Naive thymus-derived CD4-positive, alpha-beta T cell (primary cell): ENCODE measurements at regions of chr3 and their contacts with region 1.

Region 1: GRCh38 chr3:38136777-38137614 is at the start of gene ACAA1:
- DNase-seq: peak; percentile 82 to 96 (median 93)
- ATAC-seq: peak; percentile 96
- H3K4me3 ChIP-seq: peak within 1 kb of the TSS; percentile 98
- H3K4me3 Mint-ChIP-seq: peak within 1 kb of the TSS; percentile 90 to 100 (median 96)
- H3K27ac ChIP-seq: peak within 1 kb of the TSS; percentile 90
- H3K27ac Mint-ChIP-seq: peak within 1 kb of the TSS; percentile 89 to 100 (median 98)
- H3K4me1 ChIP-seq: peaks cover 18 to 35% of the 10 kb centered on the region in 2 donors
- H3K4me1 Mint-ChIP-seq: peaks cover 47 to 86% (median 67%) of the 10 kb centered on the region in 7 donors
- H3K27me3 ChIP-seq: no peaks in the 10 kb centered on the region
- H3K27me3 Mint-ChIP-seq: no peaks in the 10 kb centered on the region
- total RNA-seq, gene ACAA1: 88.1 to 129 (median 91.0) TPM

Region 2: DNA sequence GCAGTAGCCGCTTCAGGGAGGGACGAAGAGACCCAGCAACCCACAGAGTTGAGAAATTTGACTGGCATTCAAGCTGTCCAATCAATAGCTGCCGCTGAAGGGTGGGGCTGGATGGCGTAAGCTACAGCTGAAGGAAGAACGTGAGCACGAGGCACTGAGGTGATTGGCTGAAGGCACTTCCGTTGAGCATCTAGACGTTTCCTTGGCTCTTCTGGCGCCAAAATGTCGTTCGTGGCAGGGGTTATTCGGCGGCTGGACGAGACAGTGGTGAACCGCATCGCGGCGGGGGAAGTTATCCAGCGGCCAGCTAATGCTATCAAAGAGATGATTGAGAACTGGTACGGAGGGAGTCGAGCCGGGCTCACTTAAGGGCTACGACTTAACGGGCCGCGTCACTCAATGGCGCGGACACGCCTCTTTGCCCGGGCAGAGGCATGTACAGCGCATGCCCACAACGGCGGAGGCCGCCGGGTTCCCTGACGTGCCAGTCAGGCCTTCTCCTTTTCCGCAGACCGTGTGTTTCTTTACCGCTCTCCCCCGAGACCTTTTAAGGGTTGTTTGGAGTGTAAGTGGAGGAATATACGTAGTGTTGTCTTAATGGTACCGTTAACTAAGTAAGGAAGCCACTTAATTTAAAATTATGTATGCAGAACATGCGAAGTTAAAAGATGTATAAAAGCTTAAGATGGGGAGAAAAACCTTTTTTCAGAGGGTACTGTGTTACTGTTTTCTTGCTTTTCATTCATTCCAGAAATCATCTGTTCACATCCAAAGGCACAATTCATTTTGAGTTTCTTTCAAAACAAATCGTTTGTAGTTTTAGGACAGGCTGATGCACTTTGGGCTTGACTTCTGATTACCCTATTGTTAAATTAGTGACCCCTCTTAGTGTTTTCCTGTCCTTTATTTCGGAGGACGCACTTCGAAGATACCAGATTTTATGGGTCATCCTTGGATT is 1143.4 kb before region 1 on chr3 and contains the start of gene MLH1:
- CTCF ChIA-PET with region 1: no interaction called
- POLR2A ChIA-PET with region 1: interaction called, 5 read pairs
- intact Hi-C with region 1: loop called in 1 of 2 experiments (anchors 2 kb)
- DNase-seq: peak; percentile 91 to 100 (median 99)
- ATAC-seq: peak; percentile 90
- H3K4me3 ChIP-seq: peak within 1 kb of the TSS; percentile 80
- H3K4me3 Mint-ChIP-seq: peak within 1 kb of the TSS in 1 of 10 donors; percentile 26
- H3K27ac ChIP-seq: peak within 1 kb of the TSS; percentile 83
- H3K27ac Mint-ChIP-seq: no peak within 1 kb of the TSS
- H3K4me1 ChIP-seq: peaks cover 36 to 40% of the 10 kb centered on the region in 2 donors
- H3K4me1 Mint-ChIP-seq: peaks cover 23 to 43% (median 38%) of the 10 kb centered on the region in 7 donors
- H3K27me3 ChIP-seq: no peaks in the 10 kb centered on the region
- H3K27me3 Mint-ChIP-seq: no peaks in the 10 kb centered on the region
- total RNA-seq, gene MLH1: 26.4 to 42.0 (median 31.7) TPM

Region 3: DNA sequence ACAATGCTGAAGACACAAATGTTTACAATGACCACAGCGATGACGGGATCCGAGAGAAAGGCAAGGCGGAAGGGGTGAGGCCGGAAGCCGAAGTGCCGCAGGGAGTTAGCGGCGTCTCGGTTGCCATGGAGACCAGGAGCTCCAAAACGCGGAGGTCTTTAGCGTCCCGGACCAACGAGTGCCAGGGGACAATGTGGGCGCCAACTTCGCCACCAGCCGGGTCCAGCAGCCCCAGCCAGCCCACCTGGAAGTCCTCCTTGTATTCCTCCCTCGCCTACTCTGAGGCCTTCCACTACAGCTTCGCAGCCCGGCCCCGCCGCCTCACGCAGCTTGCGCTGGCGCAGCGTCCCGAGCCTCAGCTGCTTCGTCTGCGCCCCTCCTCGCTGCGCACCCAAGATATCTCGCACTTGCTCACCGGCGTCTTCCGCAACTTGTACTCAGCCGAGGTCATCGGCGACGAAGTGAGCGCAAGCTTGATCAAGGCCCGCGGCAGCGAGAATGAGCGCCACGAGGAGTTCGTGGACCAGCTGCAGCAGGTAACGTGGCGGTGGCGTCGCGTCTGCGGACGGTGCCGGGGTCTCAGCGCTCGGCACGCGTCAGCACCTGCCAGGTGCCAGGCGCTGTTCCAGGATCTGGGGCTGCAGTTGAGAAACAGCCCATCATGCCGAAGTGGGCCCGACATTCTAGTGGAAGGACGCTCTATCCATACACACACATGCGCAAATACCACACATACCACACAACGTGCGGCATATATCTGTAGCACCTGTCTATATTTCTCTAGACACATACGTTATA is 97.7 kb before region 1 on chr3 and contains the start of gene DLEC1:
- CTCF ChIA-PET with region 1: no interaction called
- POLR2A ChIA-PET with region 1: interaction called, 13 read pairs
- intact Hi-C with region 1: loop called (anchors 1 kb)
- DNase-seq: peak; percentile 56 to 86 (median 83)
- ATAC-seq: peak; percentile 72
- H3K4me3 ChIP-seq: peak within 1 kb of the TSS; percentile 62
- H3K4me3 Mint-ChIP-seq: peak within 1 kb of the TSS; percentile 71 to 92 (median 88)
- H3K27ac ChIP-seq: peak within 1 kb of the TSS; percentile 62
- H3K27ac Mint-ChIP-seq: peak within 1 kb of the TSS; percentile 89 to 97 (median 92)
- H3K4me1 ChIP-seq: peaks cover 8 to 26% of the 10 kb centered on the region in 2 donors
- H3K4me1 Mint-ChIP-seq: peaks cover 20 to 37% (median 32%) of the 10 kb centered on the region in 7 donors
- H3K27me3 ChIP-seq: no peaks in the 10 kb centered on the region
- H3K27me3 Mint-ChIP-seq: peaks cover 0 to 7% (median 0%) of the 10 kb centered on the region in 5 donors
- total RNA-seq, gene DLEC1: 1.5 to 9.4 (median 7.5) TPM

Region 4: GRCh38 chr3:38190481-38190881 is 53.5 kb after region 1 on chr3:
- CTCF ChIA-PET with region 1: no interaction called
- POLR2A ChIA-PET with region 1: no interaction called
- intact Hi-C with region 1: no loop called
- DNase-seq: no peak
- ATAC-seq: no peak
- H3K4me3 ChIP-seq: no peak overlapping the region
- H3K4me3 Mint-ChIP-seq: no peak overlapping the region
- H3K27ac ChIP-seq: no peak overlapping the region
- H3K27ac Mint-ChIP-seq: no peak overlapping the region
- H3K4me1 ChIP-seq: no peaks in the 10 kb centered on the region
- H3K4me1 Mint-ChIP-seq: peaks cover 0 to 10% (median 3%) of the 10 kb centered on the region in 7 donors
- H3K27me3 ChIP-seq: no peaks in the 10 kb centered on the region
- H3K27me3 Mint-ChIP-seq: no peaks in the 10 kb centered on the region

Region 5: GRCh38 chr3:38210141-38210757 is 73.3 kb after region 1 on chr3:
- CTCF ChIA-PET with region 1: no interaction called
- POLR2A ChIA-PET with region 1: no interaction called
- intact Hi-C with region 1: loop called (anchors 5 kb)
- DNase-seq: no peak
- ATAC-seq: peak; percentile 48
- H3K4me3 ChIP-seq: no peak overlapping the region
- H3K4me3 Mint-ChIP-seq: peak overlapping the region in 2 of 10 donors; percentile 21 to 52
- H3K27ac ChIP-seq: no peak overlapping the region
- H3K27ac Mint-ChIP-seq: peak overlapping the region in 5 of 9 donors; percentile 5 to 74 (median 65)
- H3K4me1 ChIP-seq: no peaks in the 10 kb centered on the region
- H3K4me1 Mint-ChIP-seq: peaks cover 11 to 71% (median 68%) of the 10 kb centered on the region in 7 donors
- H3K27me3 ChIP-seq: no peaks in the 10 kb centered on the region
- H3K27me3 Mint-ChIP-seq: no peaks in the 10 kb centered on the region

Region 6: DNA sequence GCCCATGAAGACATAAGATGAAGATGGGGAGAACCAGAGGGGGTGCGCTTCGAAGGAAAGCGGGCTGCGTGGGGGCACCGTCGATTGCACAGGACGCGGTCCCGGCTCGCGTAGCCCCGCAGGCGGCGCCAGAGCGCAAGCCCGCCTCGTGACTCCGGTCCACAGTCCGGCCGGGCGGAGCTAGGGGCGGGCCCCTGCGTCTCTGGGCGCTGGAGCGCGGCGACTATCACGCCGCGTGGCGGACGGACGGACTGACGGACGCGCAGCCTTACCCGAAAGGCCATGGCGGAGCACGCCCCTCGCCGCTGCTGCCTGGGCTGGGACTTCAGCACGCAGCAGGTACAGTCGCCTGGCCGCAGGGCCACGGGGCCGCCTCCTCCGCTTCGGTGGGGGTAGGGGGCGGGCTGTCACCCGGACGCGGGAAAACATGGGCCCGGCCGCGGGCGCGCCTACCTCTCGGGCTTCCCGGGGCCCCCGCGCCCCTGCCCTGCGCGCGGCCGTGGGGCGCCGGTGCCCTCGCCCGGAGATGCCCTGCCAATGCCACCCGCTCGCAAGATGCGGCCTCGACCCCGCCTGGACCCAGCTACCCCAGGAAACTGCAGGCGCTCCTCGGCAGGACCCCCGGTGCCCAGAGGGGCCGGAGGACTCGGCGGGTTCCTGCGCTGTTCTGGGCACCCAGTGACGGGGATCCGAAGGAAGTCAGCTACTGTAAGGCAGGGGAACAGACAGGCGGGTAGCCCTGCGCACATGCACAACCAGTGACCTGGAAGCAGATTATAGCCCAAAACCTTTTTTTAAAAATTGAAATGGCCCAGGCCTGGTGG is 209.8 kb after region 1 on chr3 and contains the start of gene XYLB:
- CTCF ChIA-PET with region 1: no interaction called
- POLR2A ChIA-PET with region 1: no interaction called
- intact Hi-C with region 1: loop called (anchors 2 to 5 kb)
- DNase-seq: peak; percentile 48 to 89 (median 67)
- ATAC-seq: peak; percentile 99
- H3K4me3 ChIP-seq: peak within 1 kb of the TSS; percentile 62
- H3K4me3 Mint-ChIP-seq: peak within 1 kb of the TSS; percentile 71 to 91 (median 83)
- H3K27ac ChIP-seq: peak within 1 kb of the TSS; percentile 61
- H3K27ac Mint-ChIP-seq: peak within 1 kb of the TSS in 3 of 9 donors; percentile 54 to 61 (median 54)
- H3K4me1 ChIP-seq: no peaks in the 10 kb centered on the region
- H3K4me1 Mint-ChIP-seq: peaks cover 2 to 7% (median 5%) of the 10 kb centered on the region in 7 donors
- H3K27me3 ChIP-seq: no peaks in the 10 kb centered on the region
- H3K27me3 Mint-ChIP-seq: peaks cover 0 to 4% (median 0%) of the 10 kb centered on the region in 5 donors
- total RNA-seq, gene XYLB: 1.00 to 6.7 (median 2.1) TPM

Region 7: GRCh38 chr3:38651154-38651789 is 514.3 kb after region 1 on chr3:
- CTCF ChIA-PET with region 1: no interaction called
- POLR2A ChIA-PET with region 1: no interaction called
- intact Hi-C with region 1: loop called (anchors 2 to 5 kb)
- DNase-seq: peak; percentile 38 to 73 (median 66)
- ATAC-seq: peak; percentile 73
- H3K4me3 ChIP-seq: peak overlapping the region; percentile 34
- H3K4me3 Mint-ChIP-seq: no peak overlapping the region
- H3K27ac ChIP-seq: no peak overlapping the region
- H3K27ac Mint-ChIP-seq: no peak overlapping the region
- H3K4me1 ChIP-seq: peaks cover 5 to 6% of the 10 kb centered on the region in 2 donors
- H3K4me1 Mint-ChIP-seq: peaks cover 0 to 10% (median 8%) of the 10 kb centered on the region in 7 donors
- H3K27me3 ChIP-seq: peaks cover 10 to 11% of the 10 kb centered on the region in 2 donors
- H3K27me3 Mint-ChIP-seq: peaks cover 4 to 23% (median 16%) of the 10 kb centered on the region in 5 donors

Region 8: DNA sequence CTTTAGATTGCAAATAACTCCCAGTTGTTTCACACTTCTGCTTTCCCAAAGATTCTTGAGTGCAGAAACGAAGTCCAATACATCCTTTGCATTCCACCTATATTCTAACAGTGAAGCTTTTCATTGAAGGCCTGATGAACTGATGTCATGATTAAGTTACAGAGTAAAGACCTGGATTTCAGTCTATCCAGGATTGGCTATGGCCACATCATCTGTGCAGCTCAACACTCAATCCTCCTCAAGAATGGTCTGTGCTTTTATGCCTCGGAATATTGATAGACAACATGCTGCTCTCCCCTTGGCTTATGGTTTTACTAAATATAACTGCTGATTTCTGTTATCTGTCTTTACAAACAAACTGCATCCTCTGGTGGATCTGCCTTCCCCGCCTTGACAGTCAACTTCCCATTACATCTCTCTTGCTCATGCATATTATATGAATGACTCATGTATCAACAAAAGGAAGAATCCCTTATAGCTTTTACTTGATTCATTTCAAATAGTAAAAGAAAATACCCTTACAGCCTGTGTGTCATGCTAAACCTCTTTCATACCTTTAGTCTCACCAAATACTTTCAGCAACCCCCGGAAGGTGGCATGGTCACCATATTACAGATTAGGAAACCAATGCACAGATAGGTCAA is 855.2 kb after region 1 on chr3:
- CTCF ChIA-PET with region 1: no interaction called
- POLR2A ChIA-PET with region 1: no interaction called
- intact Hi-C with region 1: no loop called
- DNase-seq: no peak
- ATAC-seq: no peak
- H3K4me3 ChIP-seq: no peak overlapping the region
- H3K4me3 Mint-ChIP-seq: no peak overlapping the region
- H3K27ac ChIP-seq: no peak overlapping the region
- H3K27ac Mint-ChIP-seq: no peak overlapping the region
- H3K4me1 ChIP-seq: no peaks in the 10 kb centered on the region
- H3K4me1 Mint-ChIP-seq: no peaks in the 10 kb centered on the region
- H3K27me3 ChIP-seq: no peaks in the 10 kb centered on the region
- H3K27me3 Mint-ChIP-seq: peaks cover 5 to 28% (median 25%) of the 10 kb centered on the region in 5 donors

Region 9: GRCh38 chr3:39383045-39383880 is 1246.3 kb after region 1 on chr3 and contains the start of gene SLC25A38:
- CTCF ChIA-PET with region 1: no interaction called
- POLR2A ChIA-PET with region 1: no interaction called
- intact Hi-C with region 1: loop called in 1 of 2 experiments (anchors 10 kb)
- DNase-seq: peak; percentile 60 to 86 (median 84)
- ATAC-seq: peak; percentile 86
- H3K4me3 ChIP-seq: peak within 1 kb of the TSS; percentile 88
- H3K4me3 Mint-ChIP-seq: peak within 1 kb of the TSS; percentile 91 to 99 (median 97)
- H3K27ac ChIP-seq: peak within 1 kb of the TSS; percentile 96
- H3K27ac Mint-ChIP-seq: peak within 1 kb of the TSS; percentile 95 to 100 (median 99)
- H3K4me1 ChIP-seq: peaks cover 26 to 39% of the 10 kb centered on the region in 2 donors
- H3K4me1 Mint-ChIP-seq: peaks cover 36 to 59% (median 49%) of the 10 kb centered on the region in 7 donors
- H3K27me3 ChIP-seq: no peaks in the 10 kb centered on the region
- H3K27me3 Mint-ChIP-seq: no peaks in the 10 kb centered on the region
- total RNA-seq, gene SLC25A38: 30.3 to 50.2 (median 46.8) TPM